ENCODE measurements at regions of chr20 and their contacts with region 1.

Region 1: DNA sequence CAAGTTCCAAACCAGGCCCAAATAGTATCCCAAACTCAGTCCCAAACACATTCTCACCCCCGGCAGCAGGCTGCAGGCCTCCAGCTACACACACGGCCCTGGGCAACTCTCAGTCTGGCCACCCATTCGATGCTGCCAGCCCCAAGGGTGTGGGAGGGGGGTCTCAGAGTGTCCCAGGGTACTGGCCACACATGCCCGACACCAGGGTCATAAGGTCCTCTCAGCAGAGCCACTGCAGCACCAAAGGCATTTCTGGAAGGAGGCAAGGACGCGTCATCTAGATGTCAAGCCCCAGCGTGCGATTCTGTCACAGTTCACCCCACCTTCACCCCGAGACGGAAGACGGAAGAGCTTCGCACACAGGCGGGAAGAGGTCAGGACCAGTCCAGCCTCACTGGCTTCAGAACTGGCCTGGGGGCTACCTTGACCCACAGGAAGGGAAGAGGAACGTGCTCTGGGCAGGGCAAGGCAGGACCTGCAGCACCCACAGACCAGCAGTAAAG is 9.5 kb downstream of the MYL9 start:
- DNase-seq: no peak
- ATAC-seq: no peak
- H3K4me3 ChIP-seq: no peak overlapping the region
- H3K4me3 Mint-ChIP-seq: no peak overlapping the region
- H3K27ac ChIP-seq: no peak overlapping the region
- H3K27ac Mint-ChIP-seq: no peak overlapping the region
- H3K4me1 ChIP-seq: no peaks in the 10 kb centered on the region
- H3K4me1 Mint-ChIP-seq: peaks cover 2% of the 10 kb centered on the region
- H3K27me3 ChIP-seq: no peaks in the 10 kb centered on the region
- H3K27me3 Mint-ChIP-seq: no peaks in the 10 kb centered on the region
- CTCF ChIP-seq: no peak

Region 2: GRCh38 chr20:36434383-36435153 is 116.3 kb before region 1 on chr20:
- CTCF ChIA-PET with region 1: no interaction called
- POLR2A ChIA-PET with region 1: no interaction called
- intact Hi-C with region 1: no loop called
- DNase-seq: no peak
- ATAC-seq: no peak
- H3K4me3 ChIP-seq: no peak overlapping the region
- H3K4me3 Mint-ChIP-seq: no peak overlapping the region
- H3K27ac ChIP-seq: no peak overlapping the region
- H3K27ac Mint-ChIP-seq: no peak overlapping the region
- H3K4me1 ChIP-seq: no peaks in the 10 kb centered on the region
- H3K4me1 Mint-ChIP-seq: peaks cover 4% of the 10 kb centered on the region
- H3K27me3 ChIP-seq: no peaks in the 10 kb centered on the region
- H3K27me3 Mint-ChIP-seq: peaks cover 4% of the 10 kb centered on the region
- CTCF ChIP-seq: no peak

Region 3: DNA sequence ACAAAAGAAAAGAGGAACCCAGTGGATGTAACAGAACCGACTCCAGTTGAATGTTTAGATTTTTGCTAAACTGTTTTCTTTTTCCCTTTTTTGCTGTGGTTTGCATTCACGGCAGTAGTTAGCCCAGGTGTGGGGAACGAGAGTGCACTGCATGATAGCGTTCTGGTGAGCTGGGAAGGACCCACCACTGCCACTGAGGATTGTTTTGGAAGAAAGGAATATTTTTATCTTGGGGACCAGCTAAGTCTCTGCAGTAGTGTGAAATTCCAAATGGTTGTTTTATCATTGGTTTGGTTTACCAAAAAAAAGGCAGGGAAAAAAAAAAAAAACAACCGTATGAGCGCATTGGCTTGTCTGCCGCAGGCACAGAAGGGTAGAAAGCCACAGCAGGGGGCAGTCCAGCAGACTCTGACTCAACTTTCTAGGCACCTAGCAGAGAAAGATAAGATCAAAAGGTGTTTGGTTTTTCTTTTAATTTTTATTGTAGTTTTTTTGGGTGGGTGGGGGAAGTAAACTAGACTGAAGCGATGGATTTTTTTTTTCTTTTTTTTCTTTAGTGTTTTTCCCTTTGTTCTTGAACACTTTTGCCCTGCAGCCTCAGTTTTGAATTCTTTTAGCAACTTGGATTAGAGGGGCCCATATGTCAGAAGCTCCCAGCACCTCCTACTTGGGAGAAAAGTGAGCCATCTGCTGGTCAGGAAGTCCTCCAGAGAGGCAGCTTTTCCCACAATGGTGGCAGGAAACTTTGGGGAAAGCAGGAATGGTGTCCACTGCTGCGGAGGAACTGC is 41.2 kb after region 1 on chr20:
- CTCF ChIA-PET with region 1: interaction called, 3 read pairs
- POLR2A ChIA-PET with region 1: interaction called, 3 read pairs
- intact Hi-C with region 1: loop called (anchors 2 to 5 kb)
- DNase-seq: peak in 5 of 9 experiments; percentile 54 to 81 (median 74)
- ATAC-seq: peak; percentile 55
- H3K4me3 ChIP-seq: no peak overlapping the region
- H3K4me3 Mint-ChIP-seq: no peak overlapping the region
- H3K27ac ChIP-seq: peak overlapping the region in 1 of 2 experiments; percentile 49
- H3K27ac Mint-ChIP-seq: peak overlapping the region; percentile 71
- H3K4me1 ChIP-seq: peaks cover 38% of the 10 kb centered on the region
- H3K4me1 Mint-ChIP-seq: peaks cover 53% of the 10 kb centered on the region
- H3K27me3 ChIP-seq: no peaks in the 10 kb centered on the region
- H3K27me3 Mint-ChIP-seq: no peaks in the 10 kb centered on the region
- CTCF ChIP-seq: no peak

Measured in CD8-positive, alpha-beta T cell (primary cell).